HEK293 (cell line): ENCODE measurements at regions of chr9 and their contacts with region 1.

Region 1: GRCh38 chr9:111399772-111400563 is 69.9 kb upstream of the OR2K2 start:
- H3K4me3 ChIP-seq: no peak overlapping the region
- H3K27ac ChIP-seq: no peak overlapping the region
- H3K4me1 ChIP-seq: no peaks in the 10 kb centered on the region
- CTCF ChIP-seq: no peak

Region 2: DNA sequence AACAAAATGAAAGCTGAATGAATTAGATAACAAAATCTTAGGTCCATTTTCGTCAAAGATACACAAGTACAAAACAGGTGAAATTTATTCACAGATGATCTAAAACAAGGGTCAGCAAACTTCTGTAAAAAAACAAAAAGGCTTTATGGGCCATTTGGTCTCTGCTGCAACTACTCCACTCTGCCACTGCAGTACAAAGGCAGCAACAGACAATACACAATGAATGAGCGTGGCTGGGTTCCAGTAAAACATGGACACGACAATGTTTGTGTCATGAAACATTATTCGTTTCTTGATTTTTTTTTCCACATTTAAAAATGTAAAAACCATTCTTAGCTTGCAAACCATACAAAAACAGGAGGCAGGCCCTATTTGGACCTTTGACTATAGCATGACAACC is 12.3 kb after region 1 on chr9:
- CTCF ChIA-PET with region 1: interaction called, 11 read pairs
- POLR2A ChIA-PET with region 1: no interaction called
- H3K4me3 ChIP-seq: no peak overlapping the region
- H3K27ac ChIP-seq: no peak overlapping the region
- H3K4me1 ChIP-seq: no peaks in the 10 kb centered on the region
- CTCF ChIP-seq: no peak